ENCODE measurements at regions of chr12 and their contacts with region 1.

Region 1: GRCh38 chr12:106163712-106164111 is 25.0 kb upstream of the NUAK1 start:
- DNase-seq: no peak
- H3K4me3 ChIP-seq: no peak overlapping the region
- H3K27ac ChIP-seq: no peak overlapping the region
- H3K4me1 ChIP-seq: no peaks in the 10 kb centered on the region
- H3K27me3 ChIP-seq: no peaks in the 10 kb centered on the region
- CTCF ChIP-seq: no peak

Region 2: GRCh38 chr12:106239241-106239950 is 75.7 kb after region 1 on chr12:
- CTCF ChIA-PET with region 1: no interaction called
- dilution Hi-C with region 1: loop called (anchors 5 kb)
- in situ Hi-C with region 1: no loop called
- intact Hi-C with region 1: no loop called
- DNase-seq: no peak
- H3K4me3 ChIP-seq: no peak overlapping the region
- H3K27ac ChIP-seq: no peak overlapping the region
- H3K4me1 ChIP-seq: peaks cover 6% of the 10 kb centered on the region
- H3K27me3 ChIP-seq: no peaks in the 10 kb centered on the region
- CTCF ChIP-seq: no peak

Region 3: GRCh38 chr12:107580750-107581618 is 1417.3 kb after region 1 on chr12:
- CTCF ChIA-PET with region 1: no interaction called
- dilution Hi-C with region 1: no loop called
- in situ Hi-C with region 1: no loop called
- intact Hi-C with region 1: no loop called
- DNase-seq: no peak
- H3K4me3 ChIP-seq: peak overlapping the region in 1 of 3 experiments; percentile 7
- H3K27ac ChIP-seq: no peak overlapping the region
- H3K4me1 ChIP-seq: peaks cover 12% of the 10 kb centered on the region
- H3K27me3 ChIP-seq: no peaks in the 10 kb centered on the region
- CTCF ChIP-seq: no peak